WTC11 (cell line): ENCODE measurements at regions of chr4 and their contacts with region 1.

Region 1: DNA sequence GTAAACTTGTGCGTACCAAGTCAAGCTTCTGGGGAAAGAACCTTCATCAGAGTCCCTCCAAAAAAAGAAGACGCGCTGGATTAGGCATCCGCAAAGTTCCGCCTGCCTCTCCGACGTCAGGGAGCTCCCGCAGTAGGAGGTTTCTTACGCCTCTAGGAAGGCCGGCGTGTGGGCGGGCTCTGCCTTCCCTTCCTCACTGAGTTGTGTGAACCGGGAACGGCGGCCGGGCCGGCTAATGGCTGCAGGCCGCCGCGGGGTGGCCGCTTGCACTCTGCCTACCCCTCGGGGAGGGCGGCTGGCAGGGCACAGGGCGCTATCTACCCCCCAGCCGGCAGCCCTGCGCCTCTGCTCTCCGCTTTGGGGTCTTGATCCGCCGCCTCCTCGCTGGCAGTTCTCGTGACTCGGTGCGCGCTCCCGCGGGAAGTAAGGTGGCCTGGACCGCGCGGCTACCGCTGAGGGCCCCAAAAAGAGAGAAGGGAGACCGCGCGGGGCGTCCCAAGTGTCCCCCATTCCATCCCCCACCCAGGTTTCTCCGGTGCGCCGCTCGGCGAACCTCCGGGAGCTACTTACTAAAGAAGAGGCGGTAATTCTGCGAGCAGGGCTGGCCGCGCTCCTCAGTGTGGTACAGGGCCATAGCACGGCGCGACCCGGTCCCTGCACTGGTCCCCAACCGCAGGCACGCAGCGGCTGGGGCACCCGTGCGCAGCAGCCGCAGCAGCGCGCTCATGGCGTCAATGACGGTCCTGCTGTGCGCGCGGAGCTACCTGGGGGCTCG is at the start of gene PPA2:
- DNase-seq: peak; percentile 76
- ATAC-seq: peak; percentile 72
- H3K4me3 Mint-ChIP-seq: peak within 1 kb of the TSS; percentile 98
- H3K27ac Mint-ChIP-seq: peak within 1 kb of the TSS; percentile 96
- H3K4me1 Mint-ChIP-seq: peaks cover 22% of the 10 kb centered on the region
- H3K27me3 Mint-ChIP-seq: peaks cover 25% of the 10 kb centered on the region
- CTCF ChIP-seq: no peak; the same call in 1 of the 2 replicates
- total RNA-seq, gene PPA2: 50.8 to 69.0 TPM (median 64.0 TPM) in 3 replicates

Region 2: GRCh38 chr4:104494185-104494584 is 979.3 kb before region 1 on chr4:
- CTCF ChIA-PET with region 1: no interaction called
- POLR2A ChIA-PET with region 1: interaction called, 10 read pairs
- DNase-seq: no peak
- ATAC-seq: no peak
- H3K4me3 Mint-ChIP-seq: peak overlapping the region; percentile 95
- H3K27ac Mint-ChIP-seq: no peak overlapping the region
- H3K4me1 Mint-ChIP-seq: peaks cover 39% of the 10 kb centered on the region
- H3K27me3 Mint-ChIP-seq: peaks cover 58% of the 10 kb centered on the region
- CTCF ChIP-seq: no peak

Region 3: DNA sequence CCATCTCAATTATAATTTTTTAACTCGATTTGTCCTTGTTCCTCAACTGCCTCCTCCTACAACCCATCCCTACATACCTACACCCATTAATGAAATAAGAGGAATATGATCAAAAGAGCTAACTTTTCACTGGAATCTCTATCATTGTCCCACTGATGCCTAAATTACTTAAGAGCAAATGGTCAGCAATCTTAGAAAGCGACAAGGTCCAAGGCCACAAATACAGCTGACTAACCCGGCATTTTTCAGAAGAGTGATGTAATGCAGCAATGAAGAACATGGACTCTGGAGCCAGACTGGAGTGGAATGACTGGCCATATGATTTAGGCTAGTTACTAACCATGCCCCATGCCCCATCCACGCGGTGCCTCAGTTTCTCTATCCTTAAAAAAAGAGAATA is 55.9 kb before region 1 on chr4:
- CTCF ChIA-PET with region 1: no interaction called
- POLR2A ChIA-PET with region 1: no interaction called
- DNase-seq: no peak
- ATAC-seq: no peak
- H3K4me3 Mint-ChIP-seq: no peak overlapping the region
- H3K27ac Mint-ChIP-seq: no peak overlapping the region
- H3K4me1 Mint-ChIP-seq: no peaks in the 10 kb centered on the region
- H3K27me3 Mint-ChIP-seq: no peaks in the 10 kb centered on the region
- CTCF ChIP-seq: no peak

Region 4: GRCh38 chr4:105453550-105454205 is 19.8 kb before region 1 on chr4:
- CTCF ChIA-PET with region 1: interaction called, 13 read pairs
- POLR2A ChIA-PET with region 1: interaction called, 5 read pairs
- DNase-seq: no peak
- ATAC-seq: peak; percentile 67
- H3K4me3 Mint-ChIP-seq: no peak overlapping the region
- H3K27ac Mint-ChIP-seq: no peak overlapping the region; the same call in 1 of the 2 replicates
- H3K4me1 Mint-ChIP-seq: peaks cover 25% of the 10 kb centered on the region
- H3K27me3 Mint-ChIP-seq: no peaks in the 10 kb centered on the region
- CTCF ChIP-seq: no peak

Region 5: DNA sequence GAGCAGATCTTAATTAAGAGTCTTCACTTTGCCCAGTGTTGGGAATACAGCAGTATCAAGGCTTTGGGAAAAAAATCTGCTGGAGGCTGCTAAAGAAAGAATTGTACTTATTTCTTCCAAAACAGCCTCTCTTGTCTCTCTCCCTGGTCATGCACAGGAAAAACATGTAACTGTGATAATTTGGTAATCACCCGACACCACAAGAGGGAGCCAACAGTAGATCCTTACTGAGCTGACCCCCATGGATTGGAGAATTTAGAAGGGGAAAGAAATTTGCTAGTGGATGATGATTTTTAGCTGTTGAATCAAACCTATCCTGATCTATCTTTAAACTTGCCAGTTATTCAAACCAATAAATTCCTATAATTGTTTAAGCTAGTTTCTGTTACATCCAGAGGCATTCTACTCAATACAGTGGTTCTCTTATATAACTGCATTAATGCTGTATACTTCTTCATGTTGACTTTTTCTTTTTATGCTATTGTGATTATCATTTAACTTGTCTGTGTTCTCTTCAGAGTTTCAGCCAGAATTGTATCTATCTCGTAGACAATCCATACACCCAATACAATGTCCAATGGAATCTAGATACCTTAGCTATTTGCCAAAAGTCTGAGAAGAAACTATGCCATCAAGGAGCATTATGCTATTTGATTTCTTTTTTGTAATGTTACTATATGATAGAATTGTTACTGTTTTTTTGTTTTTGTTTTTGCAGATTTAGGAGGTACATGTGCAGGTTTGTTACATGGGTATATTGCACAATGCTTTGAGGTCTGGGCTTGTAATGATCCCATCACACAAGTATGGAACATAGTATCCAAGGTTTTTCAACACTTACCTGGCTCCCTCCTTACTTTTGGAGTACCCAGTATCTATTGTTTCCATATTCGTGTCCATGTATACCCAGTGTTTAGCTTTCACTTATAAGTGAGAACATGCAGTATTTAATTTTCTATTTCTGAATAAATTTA is 47.6 kb after region 1 on chr4:
- CTCF ChIA-PET with region 1: interaction called, 12 read pairs
- POLR2A ChIA-PET with region 1: no interaction called
- DNase-seq: peak; percentile 27
- ATAC-seq: peak; percentile 81
- H3K4me3 Mint-ChIP-seq: no peak overlapping the region
- H3K27ac Mint-ChIP-seq: no peak overlapping the region
- H3K4me1 Mint-ChIP-seq: no peaks in the 10 kb centered on the region
- H3K27me3 Mint-ChIP-seq: peaks cover 3% of the 10 kb centered on the region; the same call in 1 of the 2 replicates
- CTCF ChIP-seq: peak; percentile 36; the same call in 1 of the 2 replicates

Region 6: GRCh38 chr4:105666693-105667092 is 193.2 kb after region 1 on chr4:
- CTCF ChIA-PET with region 1: interaction called, 10 read pairs
- POLR2A ChIA-PET with region 1: no interaction called
- DNase-seq: no peak
- ATAC-seq: peak; percentile 85
- H3K4me3 Mint-ChIP-seq: no peak overlapping the region
- H3K27ac Mint-ChIP-seq: no peak overlapping the region
- H3K4me1 Mint-ChIP-seq: no peaks in the 10 kb centered on the region
- H3K27me3 Mint-ChIP-seq: no peaks in the 10 kb centered on the region
- CTCF ChIP-seq: no peak